HCT116 (cell line): ENCODE measurements at regions of chr18 and their contacts with region 1.

Region 1: GRCh38 chr18:29874519-29875098 is 1167.9 kb downstream of the DSC3 start:
- DNase-seq: peak; percentile 10
- ATAC-seq: no peak
- H3K4me3 ChIP-seq: no peak overlapping the region
- H3K27ac ChIP-seq: no peak overlapping the region
- H3K4me1 ChIP-seq: no peaks in the 10 kb centered on the region
- H3K27me3 ChIP-seq: no peaks in the 10 kb centered on the region
- CTCF ChIP-seq: peak; percentile 31 to 63 (median 41); a peak in 4 of 6 replicates
- POLR2A ChIP-seq: no peak
- RAD21 ChIP-seq: peak; percentile 62

Region 2: GRCh38 chr18:29711924-29712323 is 162.7 kb before region 1 on chr18:
- CTCF ChIA-PET with region 1: no interaction called
- POLR2A ChIA-PET with region 1: no interaction called
- RAD21 ChIA-PET with region 1: no interaction called
- intact Hi-C with region 1: no loop called
- DNase-seq: no peak
- ATAC-seq: no peak
- H3K4me3 ChIP-seq: no peak overlapping the region
- H3K27ac ChIP-seq: no peak overlapping the region
- H3K4me1 ChIP-seq: no peaks in the 10 kb centered on the region
- H3K27me3 ChIP-seq: no peaks in the 10 kb centered on the region
- CTCF ChIP-seq: no peak
- POLR2A ChIP-seq: no peak
- RAD21 ChIP-seq: no peak

Region 3: DNA sequence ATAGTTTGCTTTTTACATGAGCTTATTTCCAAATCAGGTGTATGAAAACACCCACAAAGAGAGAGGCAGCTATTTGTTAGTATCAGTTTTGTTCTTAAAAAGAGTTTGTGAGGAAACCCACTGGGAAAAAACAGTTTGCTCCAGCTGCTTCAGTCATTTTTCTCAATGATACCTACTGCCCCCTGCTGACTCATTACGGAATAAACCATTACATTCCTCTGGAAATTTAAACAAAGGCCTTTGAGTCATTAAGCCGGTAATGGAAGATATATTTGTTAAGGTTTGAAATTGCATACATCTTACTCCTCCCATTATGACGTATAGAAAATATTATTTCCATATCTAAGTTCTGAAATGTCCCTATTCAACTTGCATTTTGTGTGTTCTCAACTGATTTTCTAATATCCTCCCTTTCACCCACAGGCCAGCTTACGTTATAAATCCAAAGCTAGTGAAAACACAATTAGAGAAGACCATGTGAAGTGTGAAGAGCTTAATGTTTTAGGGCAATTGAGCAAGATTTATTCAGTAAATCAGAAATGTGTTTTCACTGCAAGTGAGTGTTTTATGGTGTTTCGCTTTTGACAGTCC is 406.4 kb after region 1 on chr18:
- CTCF ChIA-PET with region 1: interaction called, 16 read pairs
- POLR2A ChIA-PET with region 1: no interaction called
- RAD21 ChIA-PET with region 1: no interaction called
- intact Hi-C with region 1: no loop called
- DNase-seq: peak; percentile 34
- ATAC-seq: no peak
- H3K4me3 ChIP-seq: no peak overlapping the region
- H3K27ac ChIP-seq: no peak overlapping the region
- H3K4me1 ChIP-seq: no peaks in the 10 kb centered on the region
- H3K27me3 ChIP-seq: no peaks in the 10 kb centered on the region
- CTCF ChIP-seq: peak; percentile 12 to 73 (median 60); a peak in 5 of 6 replicates
- POLR2A ChIP-seq: no peak
- RAD21 ChIP-seq: peak; percentile 38; the same call in 1 of the 2 replicates

Region 4: GRCh38 chr18:30544141-30544540 is 669.5 kb after region 1 on chr18:
- CTCF ChIA-PET with region 1: no interaction called
- POLR2A ChIA-PET with region 1: no interaction called
- RAD21 ChIA-PET with region 1: no interaction called
- intact Hi-C with region 1: no loop called
- DNase-seq: no peak
- ATAC-seq: no peak
- H3K4me3 ChIP-seq: no peak overlapping the region
- H3K27ac ChIP-seq: no peak overlapping the region
- H3K4me1 ChIP-seq: no peaks in the 10 kb centered on the region
- H3K27me3 ChIP-seq: no peaks in the 10 kb centered on the region
- CTCF ChIP-seq: no peak
- POLR2A ChIP-seq: no peak
- RAD21 ChIP-seq: no peak

Region 5: GRCh38 chr18:30889519-30890301 is 1015.1 kb after region 1 on chr18:
- CTCF ChIA-PET with region 1: interaction called, 19 read pairs
- POLR2A ChIA-PET with region 1: no interaction called
- RAD21 ChIA-PET with region 1: no interaction called
- intact Hi-C with region 1: loop called (anchors 5 kb)
- DNase-seq: peak; percentile 23
- ATAC-seq: peak; percentile 61; the same call in 1 of the 2 replicates
- H3K4me3 ChIP-seq: no peak overlapping the region
- H3K27ac ChIP-seq: no peak overlapping the region
- H3K4me1 ChIP-seq: no peaks in the 10 kb centered on the region
- H3K27me3 ChIP-seq: no peaks in the 10 kb centered on the region
- CTCF ChIP-seq: peak; percentile 21 to 53 (median 23); a peak in 4 of 6 replicates
- POLR2A ChIP-seq: no peak
- RAD21 ChIP-seq: peak; percentile 58